ENCODE measurements at regions of chr2 and their contacts with region 1.

Region 1: DNA sequence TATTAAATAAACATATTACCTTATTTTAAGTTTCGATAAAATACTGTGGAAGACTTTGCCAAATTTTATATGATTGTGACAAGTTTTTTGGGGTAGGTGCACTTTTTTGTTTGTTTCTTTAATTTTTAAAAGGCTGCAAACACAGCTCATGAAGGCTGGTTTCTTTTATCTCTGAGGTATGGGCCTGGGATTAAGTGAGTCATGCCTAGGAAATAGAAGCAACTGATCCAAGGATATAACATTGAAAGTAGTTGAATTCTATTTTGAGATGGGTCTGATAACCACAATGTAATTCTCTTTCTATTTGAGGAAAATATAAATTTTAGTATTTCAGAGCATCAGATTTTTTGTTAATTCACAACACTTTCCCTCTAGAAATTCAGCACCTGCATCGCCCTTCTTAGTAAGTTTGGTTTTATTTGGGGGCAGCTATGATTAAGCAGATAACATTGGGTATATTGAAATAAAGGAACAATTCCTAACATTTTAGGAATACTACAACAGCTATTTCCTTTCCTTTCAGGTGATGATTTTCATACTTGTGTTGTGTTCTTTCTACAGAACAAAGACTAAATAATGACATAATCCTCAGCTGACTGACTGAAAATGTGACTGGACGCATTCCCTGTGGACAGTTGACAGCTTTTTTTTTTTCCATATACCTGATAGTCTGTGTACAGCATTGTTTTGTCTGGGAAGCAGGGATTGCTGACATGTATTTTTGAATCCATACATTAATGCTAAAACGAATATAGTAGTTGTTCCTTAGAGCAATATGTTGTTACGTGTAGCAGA is 16.8 kb downstream of the RBM45 start:
- DNase-seq: peak; percentile 32
- ATAC-seq: no peak
- H3K4me3 ChIP-seq: no peak overlapping the region
- H3K27ac ChIP-seq: no peak overlapping the region
- H3K4me1 ChIP-seq: peaks cover 5% of the 10 kb centered on the region
- H3K27me3 ChIP-seq: no peaks in the 10 kb centered on the region
- CTCF ChIP-seq: no peak
- POLR2A ChIP-seq: no peak
- RAD21 ChIP-seq: no peak

Region 2: DNA sequence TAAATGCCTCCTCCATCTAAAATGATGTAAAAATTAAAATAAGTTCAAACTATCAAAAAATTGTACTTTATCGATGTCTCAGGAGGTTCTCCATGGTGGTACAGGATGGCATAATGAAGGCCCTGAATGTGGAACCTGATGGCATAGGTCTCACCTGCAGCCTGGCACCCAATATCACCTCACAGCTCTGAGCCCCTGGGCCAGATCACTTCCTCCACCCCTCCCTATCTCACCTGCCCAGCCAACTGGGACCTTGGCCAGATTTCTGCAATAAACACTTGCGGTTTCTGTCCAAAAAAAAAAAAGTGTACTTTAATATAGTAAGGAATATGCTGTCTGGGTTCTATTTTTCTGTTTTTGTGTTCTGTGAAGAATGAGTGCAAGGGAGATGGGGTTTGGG is 23.5 kb before region 1 on chr2:
- CTCF ChIA-PET with region 1: no interaction called
- POLR2A ChIA-PET with region 1: no interaction called
- dilution Hi-C with region 1: no loop called
- in situ Hi-C with region 1: no loop called
- intact Hi-C with region 1: no loop called
- DNase-seq: no peak
- ATAC-seq: no peak
- H3K4me3 ChIP-seq: no peak overlapping the region
- H3K27ac ChIP-seq: no peak overlapping the region
- H3K4me1 ChIP-seq: no peaks in the 10 kb centered on the region
- H3K27me3 ChIP-seq: no peaks in the 10 kb centered on the region
- CTCF ChIP-seq: no peak
- POLR2A ChIP-seq: no peak
- RAD21 ChIP-seq: no peak

Region 3: GRCh38 chr2:178280244-178280852 is 151.3 kb after region 1 on chr2:
- CTCF ChIA-PET with region 1: no interaction called
- POLR2A ChIA-PET with region 1: no interaction called
- dilution Hi-C with region 1: no loop called
- in situ Hi-C with region 1: no loop called
- intact Hi-C with region 1: loop called (anchors 2 kb)
- DNase-seq: peak; percentile 59
- ATAC-seq: peak; percentile 72
- H3K4me3 ChIP-seq: no peak overlapping the region
- H3K27ac ChIP-seq: no peak overlapping the region
- H3K4me1 ChIP-seq: no peaks in the 10 kb centered on the region
- H3K27me3 ChIP-seq: no peaks in the 10 kb centered on the region
- CTCF ChIP-seq: peak; percentile 73
- POLR2A ChIP-seq: no peak
- RAD21 ChIP-seq: peak; percentile 54